Gastrocnemius medialis (tissue), 4 donors: ENCODE measurements at regions of chr1 and their contacts with region 1.

Region 1: GRCh38 chr1:114346480-114347029 is 164.4 kb downstream of the TRIM33 start:
- DNase-seq: peak; percentile 84 to 88
- ATAC-seq: peak; percentile 91 to 97
- H3K4me3 ChIP-seq: peak overlapping the region; percentile 52 to 63 (median 61)
- H3K27ac ChIP-seq: peak overlapping the region; percentile 48 to 69 (median 55)
- H3K4me1 ChIP-seq: peaks cover 7 to 10% of the 10 kb centered on the region in 2 donors
- H3K27me3 ChIP-seq: no peaks in the 10 kb centered on the region
- CTCF ChIP-seq: peak; percentile 97 to 100 (median 100)
- POLR2A ChIP-seq: no peak

Region 2: DNA sequence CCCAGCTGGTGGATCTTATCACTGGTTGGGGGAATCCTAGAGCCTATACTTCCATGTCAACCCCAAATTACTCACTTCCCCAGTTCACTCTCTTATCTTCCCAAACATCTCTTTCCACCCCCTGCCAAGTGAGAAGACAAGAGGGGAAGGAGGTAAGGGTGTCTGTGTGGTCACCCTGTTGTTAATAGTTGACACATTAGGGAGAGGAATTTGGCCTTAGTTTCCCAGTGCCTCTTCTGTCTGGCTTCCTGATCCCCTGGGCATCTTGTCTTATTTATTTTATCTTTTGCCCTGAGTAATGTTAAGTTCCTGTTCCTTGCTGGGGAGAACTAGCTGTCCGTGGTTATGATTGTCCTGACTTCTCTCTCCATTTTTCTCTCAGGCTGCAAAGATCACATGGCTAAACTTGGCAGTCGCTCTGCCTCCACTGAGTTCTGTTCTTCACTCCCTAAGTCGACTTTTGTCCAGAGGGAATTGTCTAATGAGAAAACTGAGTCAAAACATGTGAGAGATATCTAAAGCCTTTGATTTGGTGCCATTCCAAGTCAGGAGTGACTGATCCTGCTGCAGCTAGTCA is 35.8 kb before region 1 on chr1:
- in situ Hi-C with region 1: no loop called
- intact Hi-C with region 1: no loop called
- DNase-seq: no peak
- ATAC-seq: no peak
- H3K4me3 ChIP-seq: no peak overlapping the region
- H3K27ac ChIP-seq: no peak overlapping the region
- H3K4me1 ChIP-seq: no peaks in the 10 kb centered on the region
- H3K27me3 ChIP-seq: no peaks in the 10 kb centered on the region
- CTCF ChIP-seq: no peak
- POLR2A ChIP-seq: no peak

Region 3: GRCh38 chr1:114428083-114428749 is 81.7 kb after region 1 on chr1:
- in situ Hi-C with region 1: no loop called
- intact Hi-C with region 1: loop called (anchors 1 kb)
- DNase-seq: no peak
- ATAC-seq: no peak
- H3K4me3 ChIP-seq: no peak overlapping the region
- H3K27ac ChIP-seq: no peak overlapping the region
- H3K4me1 ChIP-seq: no peaks in the 10 kb centered on the region
- H3K27me3 ChIP-seq: no peaks in the 10 kb centered on the region
- CTCF ChIP-seq: peak in 2 of 5 experiments; percentile 26 to 40
- POLR2A ChIP-seq: no peak

Region 4: DNA sequence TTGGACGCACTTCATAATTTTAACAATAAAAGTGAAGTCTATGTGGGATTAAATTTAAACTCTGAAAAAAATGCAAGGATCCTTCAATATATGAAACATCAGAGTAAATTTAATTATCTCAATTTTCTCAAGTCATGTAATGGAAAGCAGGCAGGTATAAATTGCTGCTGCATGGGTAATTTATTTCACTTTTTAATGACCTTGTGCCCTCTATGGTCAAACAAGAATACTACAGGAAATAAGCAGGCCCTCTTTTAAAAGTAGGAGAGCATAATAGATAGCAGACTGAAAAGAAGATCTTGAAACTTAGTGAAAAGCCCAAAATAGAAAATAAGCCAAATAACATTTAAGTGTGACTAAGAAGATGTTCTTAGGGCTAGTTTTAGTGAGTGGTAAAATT is 212.0 kb after region 1 on chr1:
- in situ Hi-C with region 1: no loop called
- intact Hi-C with region 1: loop called (anchors 5 kb)
- DNase-seq: no peak
- ATAC-seq: no peak
- H3K4me3 ChIP-seq: no peak overlapping the region
- H3K27ac ChIP-seq: no peak overlapping the region
- H3K4me1 ChIP-seq: no peaks in the 10 kb centered on the region
- H3K27me3 ChIP-seq: no peaks in the 10 kb centered on the region
- CTCF ChIP-seq: peak in 2 of 5 experiments; percentile 21 to 28
- POLR2A ChIP-seq: no peak

Region 5: DNA sequence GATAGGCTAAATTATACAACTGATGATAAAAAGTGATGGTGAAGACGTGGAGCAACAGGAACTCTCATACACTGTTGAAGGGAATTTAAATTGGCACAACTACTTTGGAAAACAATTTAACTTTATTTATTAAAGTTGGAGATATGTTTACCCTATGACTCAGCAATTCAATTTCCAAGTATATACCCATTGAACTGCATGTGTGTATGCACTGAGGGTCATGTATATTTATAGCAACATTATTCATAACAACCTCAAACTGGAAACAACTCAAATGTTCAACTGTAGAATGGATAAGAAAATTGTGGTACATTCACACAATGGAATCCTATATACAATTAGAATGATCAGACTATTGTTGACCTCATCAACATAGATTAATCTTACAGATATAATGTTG is 251.4 kb after region 1 on chr1:
- in situ Hi-C with region 1: no loop called
- intact Hi-C with region 1: loop called (anchors 5 kb)
- DNase-seq: no peak
- ATAC-seq: peak; percentile 87 to 89
- H3K4me3 ChIP-seq: no peak overlapping the region
- H3K27ac ChIP-seq: peak overlapping the region; percentile 81 to 84 (median 82)
- H3K4me1 ChIP-seq: peaks cover 26% of the 10 kb centered on the region in 2 donors
- H3K27me3 ChIP-seq: no peaks in the 10 kb centered on the region
- CTCF ChIP-seq: no peak
- POLR2A ChIP-seq: no peak

Region 6: GRCh38 chr1:114757455-114758250 is 411.1 kb after region 1 on chr1 and contains the start of gene CSDE1:
- in situ Hi-C with region 1: no loop called
- intact Hi-C with region 1: loop called (anchors 2 kb)
- DNase-seq: peak; percentile 98
- ATAC-seq: peak; percentile 83 to 86
- H3K4me3 ChIP-seq: peak within 1 kb of the TSS; percentile 83 to 98 (median 90)
- H3K27ac ChIP-seq: peak within 1 kb of the TSS; percentile 97 to 100 (median 98)
- H3K4me1 ChIP-seq: peaks cover 33 to 38% of the 10 kb centered on the region in 2 donors
- H3K27me3 ChIP-seq: no peaks in the 10 kb centered on the region
- CTCF ChIP-seq: peak; percentile 17 to 66 (median 61)
- POLR2A ChIP-seq: peak; percentile 95 to 96
- total RNA-seq, gene CSDE1: 2,331 to 4,024 (median 3,697) TPM

Region 7: GRCh38 chr1:115052454-115053083 is 706.0 kb after region 1 on chr1:
- in situ Hi-C with region 1: loop called in 1 of 4 experiments (anchors 25 kb)
- intact Hi-C with region 1: loop called (anchors 2 kb)
- DNase-seq: peak in 1 of 2 donors; percentile 39
- ATAC-seq: peak in 1 of 2 donors; percentile 81
- H3K4me3 ChIP-seq: no peak overlapping the region
- H3K27ac ChIP-seq: no peak overlapping the region
- H3K4me1 ChIP-seq: no peaks in the 10 kb centered on the region
- H3K27me3 ChIP-seq: no peaks in the 10 kb centered on the region
- CTCF ChIP-seq: peak; percentile 51 to 78 (median 59)
- POLR2A ChIP-seq: no peak